H1 (cell line): ENCODE measurements at regions of chr2 and their contacts with region 1.

Region 1: DNA sequence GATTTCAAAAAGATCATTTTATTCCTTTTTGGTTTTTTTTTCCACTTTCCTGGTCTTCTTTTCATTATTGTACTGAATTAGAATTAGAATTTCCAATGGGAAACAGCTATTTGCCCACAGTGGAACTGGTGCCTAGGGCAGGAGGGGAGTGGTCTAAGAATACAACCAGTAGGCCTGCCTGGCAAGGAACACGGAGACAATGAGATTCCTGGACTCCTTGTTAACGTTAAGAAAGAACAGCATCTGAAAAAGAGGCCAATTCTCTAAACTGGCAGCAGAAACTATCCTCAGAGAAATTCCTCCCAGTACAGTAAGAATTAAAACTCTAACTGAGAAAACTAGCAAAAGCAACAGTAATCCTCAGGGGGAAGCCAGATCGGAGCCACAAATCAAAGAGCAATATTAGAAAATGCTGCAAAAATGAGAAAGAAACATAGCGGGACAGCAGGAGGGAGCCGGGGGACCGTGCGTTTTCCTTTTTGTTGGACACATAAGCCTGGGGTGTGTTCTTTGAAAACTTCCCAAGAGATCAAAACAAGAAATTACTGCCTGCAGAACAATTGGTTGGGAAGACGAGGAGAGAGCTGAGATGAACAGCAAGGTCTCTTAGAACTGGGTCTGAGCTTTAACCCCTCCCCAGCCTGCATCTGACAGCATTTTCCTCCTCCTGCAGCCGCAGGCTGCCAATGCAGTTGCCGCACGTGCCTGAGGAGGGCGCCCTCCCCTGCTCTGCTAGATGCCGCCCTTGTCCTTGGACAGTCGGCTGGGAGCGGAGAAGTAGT is 776.0 kb downstream of the TSN start:
- DNase-seq: peak; percentile 53 to 98
- H3K4me3 ChIP-seq: no peak overlapping the region
- H3K27ac ChIP-seq: no peak overlapping the region
- H3K4me1 ChIP-seq: peaks cover 0 to 5% (median 0%) of the 10 kb centered on the region in 4 experiments; a peak in 4 of 7 replicates
- H3K27me3 ChIP-seq: no peaks in the 10 kb centered on the region
- CTCF ChIP-seq: peak; percentile 88 to 100 (median 99)
- EP300 ChIP-seq: no peak
- POLR2A ChIP-seq: no peak
- RAD21 ChIP-seq: peak; percentile 94

Region 2: GRCh38 chr2:122519366-122519765 is 12.1 kb before region 1 on chr2:
- CTCF ChIA-PET with region 1: interaction called, 38 read pairs
- POLR2A ChIA-PET with region 1: no interaction called
- DNase-seq: no peak
- H3K4me3 ChIP-seq: no peak overlapping the region
- H3K27ac ChIP-seq: no peak overlapping the region
- H3K4me1 ChIP-seq: peaks cover 1 to 17% (median 14%) of the 10 kb centered on the region in 4 experiments; a peak in 5 of 7 replicates
- H3K27me3 ChIP-seq: no peaks in the 10 kb centered on the region
- CTCF ChIP-seq: peak in 1 of 3 experiments; percentile 56; a peak in 1 of 4 replicates
- EP300 ChIP-seq: no peak
- POLR2A ChIP-seq: no peak
- RAD21 ChIP-seq: peak; percentile 35 to 42; a peak in 3 of 4 replicates